CD8-positive, alpha-beta T cell (primary cell): ENCODE measurements at regions of chr15 and their contacts with region 1.

Region 1: GRCh38 chr15:40857601-40858341 is 13.9 kb downstream of the SPINT1 start:
- DNase-seq: peak; percentile 70 to 87 (median 79)
- ATAC-seq: peak; percentile 97
- H3K4me3 ChIP-seq: no peak overlapping the region
- H3K4me3 Mint-ChIP-seq: no peak overlapping the region
- H3K27ac ChIP-seq: no peak overlapping the region
- H3K27ac Mint-ChIP-seq: no peak overlapping the region
- H3K4me1 ChIP-seq: peaks cover 5% of the 10 kb centered on the region
- H3K4me1 Mint-ChIP-seq: no peaks in the 10 kb centered on the region
- H3K27me3 ChIP-seq: no peaks in the 10 kb centered on the region
- H3K27me3 Mint-ChIP-seq: no peaks in the 10 kb centered on the region
- CTCF ChIP-seq: peak; percentile 79

Region 2: GRCh38 chr15:40838776-40839175 is 19.0 kb before region 1 on chr15:
- CTCF ChIA-PET with region 1: interaction called, 16 read pairs
- POLR2A ChIA-PET with region 1: no interaction called
- intact Hi-C with region 1: no loop called
- DNase-seq: no peak
- ATAC-seq: no peak
- H3K4me3 ChIP-seq: no peak overlapping the region
- H3K4me3 Mint-ChIP-seq: no peak overlapping the region
- H3K27ac ChIP-seq: no peak overlapping the region
- H3K27ac Mint-ChIP-seq: no peak overlapping the region
- H3K4me1 ChIP-seq: no peaks in the 10 kb centered on the region
- H3K4me1 Mint-ChIP-seq: peaks cover 4% of the 10 kb centered on the region
- H3K27me3 ChIP-seq: peaks cover 0 to 4% of the 10 kb centered on the region in 2 experiments
- H3K27me3 Mint-ChIP-seq: peaks cover 11% of the 10 kb centered on the region
- CTCF ChIP-seq: no peak

Region 3: GRCh38 chr15:40873625-40874561 is 16.1 kb after region 1 on chr15 and contains the start of gene RHOV:
- CTCF ChIA-PET with region 1: interaction called, 136 read pairs
- POLR2A ChIA-PET with region 1: interaction called, 3 read pairs
- intact Hi-C with region 1: no loop called
- DNase-seq: peak in 8 of 9 experiments; percentile 21 to 71 (median 58)
- ATAC-seq: peak; percentile 85
- H3K4me3 ChIP-seq: peak within 1 kb of the TSS; percentile 36 to 59
- H3K4me3 Mint-ChIP-seq: peak within 1 kb of the TSS; percentile 86
- H3K27ac ChIP-seq: no peak within 1 kb of the TSS
- H3K27ac Mint-ChIP-seq: no peak within 1 kb of the TSS
- H3K4me1 ChIP-seq: peaks cover 7% of the 10 kb centered on the region
- H3K4me1 Mint-ChIP-seq: peaks cover 5% of the 10 kb centered on the region
- H3K27me3 ChIP-seq: peaks cover 0 to 12% of the 10 kb centered on the region in 2 experiments
- H3K27me3 Mint-ChIP-seq: peaks cover 14% of the 10 kb centered on the region
- CTCF ChIP-seq: peak; percentile 18
- total RNA-seq, gene RHOV: 0.24 to 0.25 TPM

Region 4: DNA sequence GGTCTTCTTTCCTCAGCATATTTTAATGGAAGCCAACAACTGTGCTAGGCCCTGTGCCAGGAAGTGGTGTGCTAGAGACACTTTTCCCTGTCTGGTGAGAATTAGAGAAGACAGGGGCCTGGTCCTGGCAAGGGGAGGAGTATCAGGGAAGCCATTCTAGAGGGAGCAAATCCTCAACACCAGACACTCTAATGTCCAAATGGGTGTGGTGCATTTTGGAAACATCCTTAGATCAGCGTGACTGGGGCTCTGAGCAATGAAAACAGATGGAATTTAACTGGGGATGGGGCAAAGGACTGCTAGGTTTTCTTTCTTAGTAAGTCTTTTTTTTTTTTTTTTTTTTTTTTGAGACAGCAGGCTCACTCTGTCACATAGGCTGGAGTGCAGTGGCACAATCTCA is 28.8 kb after region 1 on chr15:
- CTCF ChIA-PET with region 1: interaction called, 109 read pairs
- POLR2A ChIA-PET with region 1: no interaction called
- intact Hi-C with region 1: no loop called
- DNase-seq: no peak
- ATAC-seq: no peak
- H3K4me3 ChIP-seq: no peak overlapping the region
- H3K4me3 Mint-ChIP-seq: no peak overlapping the region
- H3K27ac ChIP-seq: no peak overlapping the region
- H3K27ac Mint-ChIP-seq: no peak overlapping the region
- H3K4me1 ChIP-seq: peaks cover 13% of the 10 kb centered on the region
- H3K4me1 Mint-ChIP-seq: peaks cover 10% of the 10 kb centered on the region
- H3K27me3 ChIP-seq: peaks cover 0 to 7% of the 10 kb centered on the region in 2 experiments
- H3K27me3 Mint-ChIP-seq: no peaks in the 10 kb centered on the region
- CTCF ChIP-seq: no peak

Region 5: GRCh38 chr15:41022487-41023090 is 164.8 kb after region 1 on chr15:
- CTCF ChIA-PET with region 1: interaction called, 5 read pairs
- POLR2A ChIA-PET with region 1: no interaction called
- intact Hi-C with region 1: loop called in 1 of 2 experiments (anchors 1 kb)
- DNase-seq: peak; percentile 1 to 65 (median 32)
- ATAC-seq: peak; percentile 72
- H3K4me3 ChIP-seq: no peak overlapping the region
- H3K4me3 Mint-ChIP-seq: no peak overlapping the region
- H3K27ac ChIP-seq: no peak overlapping the region
- H3K27ac Mint-ChIP-seq: no peak overlapping the region
- H3K4me1 ChIP-seq: no peaks in the 10 kb centered on the region
- H3K4me1 Mint-ChIP-seq: peaks cover 1% of the 10 kb centered on the region
- H3K27me3 ChIP-seq: no peaks in the 10 kb centered on the region
- H3K27me3 Mint-ChIP-seq: no peaks in the 10 kb centered on the region
- CTCF ChIP-seq: peak; percentile 66